ENCODE measurements at regions of chr16 and their contacts with region 1.

Region 1: DNA sequence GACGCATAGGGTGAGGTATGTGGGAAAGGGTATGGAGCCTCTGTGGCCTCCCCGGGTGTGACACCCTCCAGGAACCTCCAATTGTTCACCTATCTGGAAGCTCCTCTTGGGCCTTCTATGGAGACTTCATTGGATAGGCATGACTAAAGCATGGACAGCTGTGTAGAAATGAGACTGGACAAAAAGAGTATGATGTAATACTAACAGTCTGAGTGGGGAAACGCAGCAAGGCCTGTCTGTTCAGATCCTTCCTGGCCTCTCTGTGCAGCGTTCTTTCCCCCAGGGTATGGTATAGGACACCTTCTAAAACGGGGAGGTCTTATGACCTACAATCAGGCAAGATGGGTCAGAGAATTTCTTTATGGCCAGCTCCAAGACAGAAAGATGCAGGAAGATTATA is 30.7 kb upstream of the CCNF start:
- DNase-seq: no peak
- ATAC-seq: no peak
- H3K4me3 ChIP-seq: no peak overlapping the region
- H3K4me3 Mint-ChIP-seq: no peak overlapping the region
- H3K27ac ChIP-seq: no peak overlapping the region
- H3K27ac Mint-ChIP-seq: no peak overlapping the region
- H3K4me1 ChIP-seq: no peaks in the 10 kb centered on the region
- H3K4me1 Mint-ChIP-seq: no peaks in the 10 kb centered on the region
- H3K27me3 ChIP-seq: no peaks in the 10 kb centered on the region
- H3K27me3 Mint-ChIP-seq: no peaks in the 10 kb centered on the region
- CTCF ChIP-seq: no peak

Region 2: GRCh38 chr16:2308089-2308962 is 90.2 kb before region 1 on chr16:
- CTCF ChIA-PET with region 1: no interaction called
- POLR2A ChIA-PET with region 1: no interaction called
- intact Hi-C with region 1: loop called in 1 of 2 experiments (anchors 10 kb)
- DNase-seq: no peak
- ATAC-seq: no peak
- H3K4me3 ChIP-seq: no peak overlapping the region
- H3K4me3 Mint-ChIP-seq: no peak overlapping the region
- H3K27ac ChIP-seq: no peak overlapping the region
- H3K27ac Mint-ChIP-seq: no peak overlapping the region
- H3K4me1 ChIP-seq: no peaks in the 10 kb centered on the region
- H3K4me1 Mint-ChIP-seq: no peaks in the 10 kb centered on the region
- H3K27me3 ChIP-seq: no peaks in the 10 kb centered on the region
- H3K27me3 Mint-ChIP-seq: no peaks in the 10 kb centered on the region
- CTCF ChIP-seq: no peak

Measured in CD8-positive, alpha-beta T cell (primary cell).